OCI-LY7 (cell line): ENCODE measurements at regions of chr2 and their contacts with region 1.

Region 1: GRCh38 chr2:53362934-53363333 is 404.7 kb upstream of the CHAC2 start:
- DNase-seq: no peak
- H3K4me3 ChIP-seq: no peak overlapping the region
- H3K27ac ChIP-seq: no peak overlapping the region
- H3K4me1 ChIP-seq: no peaks in the 10 kb centered on the region
- CTCF ChIP-seq: no peak

Region 2: GRCh38 chr2:53381271-53381670 is 18.3 kb after region 1 on chr2:
- CTCF ChIA-PET with region 1: no interaction called
- POLR2A ChIA-PET with region 1: no interaction called
- intact Hi-C with region 1: loop called (anchors 2 kb)
- DNase-seq: no peak
- H3K4me3 ChIP-seq: no peak overlapping the region
- H3K27ac ChIP-seq: no peak overlapping the region
- H3K4me1 ChIP-seq: no peaks in the 10 kb centered on the region
- CTCF ChIP-seq: no peak